Tibial artery (tissue), 4 donors: ENCODE measurements at regions of chr14 and their contacts with region 1.

Region 1: GRCh38 chr14:50116181-50116956 is at the start of gene VCPKMT:
- DNase-seq: peak; percentile 93 to 95
- H3K4me3 ChIP-seq: peak within 1 kb of the TSS; percentile 76 to 83
- H3K27ac ChIP-seq: peak within 1 kb of the TSS; percentile 83 to 86
- H3K4me1 ChIP-seq: peaks cover 0 to 22% (median 12%) of the 10 kb centered on the region in 4 donors
- H3K27me3 ChIP-seq: no peaks in the 10 kb centered on the region
- CTCF ChIP-seq: no peak

Region 2: DNA sequence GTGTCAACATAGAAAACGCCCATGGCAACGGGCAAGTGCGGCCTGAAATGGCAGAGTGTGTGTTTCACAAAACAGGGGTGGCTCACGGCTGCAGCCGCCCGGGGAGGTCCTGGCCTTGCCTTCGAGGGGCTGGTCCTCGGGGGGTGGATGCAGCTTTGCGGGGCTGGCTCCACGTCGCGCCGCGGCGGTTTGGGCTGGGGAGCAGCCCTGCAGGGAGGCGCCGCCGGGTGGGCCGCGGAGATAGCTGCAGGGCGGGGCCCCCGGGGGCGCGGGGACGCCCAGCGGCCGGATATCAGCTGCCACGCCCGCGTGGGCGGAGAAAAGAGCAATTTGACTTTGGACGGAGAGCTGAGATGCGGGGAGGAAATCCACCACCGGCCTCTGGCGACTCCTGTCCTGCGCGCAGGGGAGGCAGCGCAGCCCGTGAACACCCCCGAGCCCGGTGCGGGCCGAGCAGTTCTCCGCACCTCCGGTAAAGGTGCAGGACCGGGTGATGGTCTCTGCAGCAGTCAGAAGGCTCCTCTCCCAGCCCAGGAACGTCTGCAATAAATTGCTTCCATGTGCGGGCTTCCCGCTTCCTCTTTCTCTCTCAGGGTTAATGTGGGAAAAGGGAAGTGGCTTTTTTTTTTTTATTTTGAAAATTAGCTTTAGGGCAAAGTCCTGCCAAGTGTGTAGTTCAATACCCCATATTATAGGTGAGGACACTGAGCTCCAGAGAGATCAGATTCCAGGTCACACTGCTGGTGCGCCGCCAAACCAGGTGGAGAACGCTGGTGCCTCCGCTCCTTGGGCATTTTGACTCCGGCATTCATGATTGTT is 112.9 kb before region 1 on chr14:
- intact Hi-C with region 1: loop called (anchors 10 kb)
- DNase-seq: peak; percentile 79 to 88
- H3K4me3 ChIP-seq: peak overlapping the region; percentile 55 to 56
- H3K27ac ChIP-seq: peak overlapping the region; percentile 84 to 94
- H3K4me1 ChIP-seq: peaks cover 0 to 57% (median 52%) of the 10 kb centered on the region in 4 donors
- H3K27me3 ChIP-seq: no peaks in the 10 kb centered on the region
- CTCF ChIP-seq: peak; percentile 13 to 16

Region 3: GRCh38 chr14:50060871-50061663 is 55.3 kb before region 1 on chr14:
- intact Hi-C with region 1: no loop called
- DNase-seq: peak; percentile 82 to 83
- H3K4me3 ChIP-seq: peak overlapping the region; percentile 4 to 21
- H3K27ac ChIP-seq: peak overlapping the region; percentile 52 to 71
- H3K4me1 ChIP-seq: peaks cover 6 to 34% (median 31%) of the 10 kb centered on the region in 4 donors
- H3K27me3 ChIP-seq: no peaks in the 10 kb centered on the region
- CTCF ChIP-seq: peak; percentile 44 to 58